Esophagus muscularis mucosa (tissue), 4 donors: ENCODE measurements at regions of chr9 and their contacts with region 1.

Region 1: GRCh38 chr9:96317335-96317980 is 15.5 kb upstream of the HSD17B3 start:
- DNase-seq: no peak
- H3K4me3 ChIP-seq: no peak overlapping the region
- H3K27ac ChIP-seq: no peak overlapping the region
- H3K4me1 ChIP-seq: peaks cover 0 to 4% (median 2%) of the 10 kb centered on the region in 4 donors
- H3K27me3 ChIP-seq: no peaks in the 10 kb centered on the region
- CTCF ChIP-seq: peak; percentile 76 to 93 (median 87)
- EP300 ChIP-seq: no peak
- POLR2A ChIP-seq: no peak

Region 2: DNA sequence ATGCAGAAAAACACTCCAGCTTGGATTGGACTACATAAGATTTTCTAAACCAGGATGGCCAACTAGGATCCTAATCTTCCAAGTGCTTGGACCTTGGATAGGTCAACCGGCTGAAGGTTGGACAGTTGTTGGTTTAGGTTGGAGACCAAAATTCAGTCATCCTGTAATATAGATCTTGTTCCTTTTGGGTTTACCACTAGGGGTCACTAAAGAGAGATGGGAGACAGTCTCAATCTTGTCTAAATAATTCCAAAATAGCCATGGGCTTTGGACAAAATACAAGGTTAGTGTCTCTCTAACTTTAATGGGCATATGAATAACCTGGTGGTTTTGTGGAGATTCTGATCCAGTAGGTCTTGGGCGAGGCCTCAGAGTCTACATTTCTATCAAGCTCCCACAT is 590.7 kb before region 1 on chr9:
- intact Hi-C with region 1: loop called (anchors 5 kb)
- DNase-seq: no peak
- H3K4me3 ChIP-seq: no peak overlapping the region
- H3K27ac ChIP-seq: no peak overlapping the region
- H3K4me1 ChIP-seq: no peaks in the 10 kb centered on the region
- H3K27me3 ChIP-seq: no peaks in the 10 kb centered on the region
- CTCF ChIP-seq: peak; percentile 68 to 77 (median 70)
- EP300 ChIP-seq: no peak
- POLR2A ChIP-seq: no peak

Region 3: DNA sequence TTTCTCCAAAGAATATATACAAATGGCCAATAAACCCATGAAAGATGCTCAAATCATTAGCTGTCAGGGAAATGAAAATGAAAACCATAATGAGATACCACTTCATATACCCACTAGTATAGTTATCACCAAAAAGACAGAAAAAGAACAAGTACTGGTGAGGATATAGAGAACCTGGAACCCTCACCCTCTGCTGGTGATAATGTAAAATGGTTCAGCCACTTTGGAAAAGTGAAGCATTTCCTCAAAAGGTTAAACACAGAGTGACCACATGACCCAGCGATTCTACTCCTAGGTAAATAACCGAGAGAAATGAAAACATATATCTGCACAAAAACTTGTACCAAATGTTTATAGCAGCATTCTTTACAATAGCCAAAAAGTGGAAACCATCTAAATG is 87.5 kb before region 1 on chr9:
- intact Hi-C with region 1: loop called (anchors 2 kb)
- DNase-seq: no peak
- H3K4me3 ChIP-seq: no peak overlapping the region
- H3K27ac ChIP-seq: no peak overlapping the region
- H3K4me1 ChIP-seq: peaks cover 9 to 18% (median 15%) of the 10 kb centered on the region in 4 donors
- H3K27me3 ChIP-seq: no peaks in the 10 kb centered on the region
- CTCF ChIP-seq: no peak
- EP300 ChIP-seq: no peak
- POLR2A ChIP-seq: no peak

Region 4: GRCh38 chr9:96256800-96257199 is 60.7 kb before region 1 on chr9:
- intact Hi-C with region 1: no loop called
- DNase-seq: no peak
- H3K4me3 ChIP-seq: no peak overlapping the region
- H3K27ac ChIP-seq: no peak overlapping the region
- H3K4me1 ChIP-seq: peaks cover 0 to 16% (median 7%) of the 10 kb centered on the region in 4 donors
- H3K27me3 ChIP-seq: no peaks in the 10 kb centered on the region
- CTCF ChIP-seq: no peak
- EP300 ChIP-seq: no peak
- POLR2A ChIP-seq: no peak

Region 5: DNA sequence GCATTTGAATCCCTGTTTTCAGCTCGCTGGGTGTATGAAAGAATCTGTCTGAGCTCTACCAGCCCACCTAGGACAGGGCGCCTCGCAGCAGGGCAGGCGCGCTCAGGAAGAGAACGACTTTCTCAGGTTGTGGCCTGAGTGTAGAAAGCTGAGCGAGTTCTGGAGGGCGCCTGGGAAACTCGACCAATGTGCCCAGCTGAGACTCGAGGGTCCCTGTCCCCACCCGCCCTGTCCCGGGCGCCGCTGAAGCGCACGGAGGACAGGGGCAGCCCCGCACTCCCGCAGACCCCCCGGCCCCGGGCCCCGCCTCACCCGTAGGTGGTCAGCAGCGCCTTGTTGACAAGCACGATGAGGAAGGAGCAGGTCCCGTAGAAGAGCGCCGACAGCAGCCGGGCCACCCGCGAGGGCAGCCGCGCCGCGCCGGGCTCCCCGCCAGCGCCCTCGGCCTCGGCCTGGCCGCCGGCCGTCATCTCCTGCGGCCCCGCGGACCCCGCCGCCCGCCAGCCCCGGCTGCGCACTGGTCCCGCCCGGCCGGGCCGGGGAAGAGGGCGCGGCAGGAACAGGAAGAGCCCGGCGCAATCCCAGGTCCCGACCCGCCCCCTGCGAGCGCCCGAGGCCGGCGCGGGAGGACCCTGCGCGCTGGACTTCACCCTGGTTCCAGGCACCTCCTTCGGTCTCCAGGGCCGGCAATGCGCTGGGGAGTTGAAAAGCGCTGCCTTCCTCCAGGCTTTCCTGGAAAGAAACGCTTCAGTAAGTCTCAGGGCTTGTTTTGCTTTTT is 65.9 kb after region 1 on chr9 and contains the start of gene SLC35D2:
- intact Hi-C with region 1: no loop called
- DNase-seq: no peak
- H3K4me3 ChIP-seq: peak within 1 kb of the TSS; percentile 79 to 89 (median 88)
- H3K27ac ChIP-seq: peak within 1 kb of the TSS; percentile 86 to 93 (median 92)
- H3K4me1 ChIP-seq: peaks cover 26 to 37% (median 33%) of the 10 kb centered on the region in 4 donors
- H3K27me3 ChIP-seq: no peaks in the 10 kb centered on the region
- CTCF ChIP-seq: peak in 1 of 3 experiments; percentile 5
- EP300 ChIP-seq: no peak
- POLR2A ChIP-seq: no peak
- total RNA-seq, gene SLC35D2: 20.5 to 29.5 (median 21.8) TPM